ENCODE measurements at regions of chr4 and their contacts with region 1.

Region 1: DNA sequence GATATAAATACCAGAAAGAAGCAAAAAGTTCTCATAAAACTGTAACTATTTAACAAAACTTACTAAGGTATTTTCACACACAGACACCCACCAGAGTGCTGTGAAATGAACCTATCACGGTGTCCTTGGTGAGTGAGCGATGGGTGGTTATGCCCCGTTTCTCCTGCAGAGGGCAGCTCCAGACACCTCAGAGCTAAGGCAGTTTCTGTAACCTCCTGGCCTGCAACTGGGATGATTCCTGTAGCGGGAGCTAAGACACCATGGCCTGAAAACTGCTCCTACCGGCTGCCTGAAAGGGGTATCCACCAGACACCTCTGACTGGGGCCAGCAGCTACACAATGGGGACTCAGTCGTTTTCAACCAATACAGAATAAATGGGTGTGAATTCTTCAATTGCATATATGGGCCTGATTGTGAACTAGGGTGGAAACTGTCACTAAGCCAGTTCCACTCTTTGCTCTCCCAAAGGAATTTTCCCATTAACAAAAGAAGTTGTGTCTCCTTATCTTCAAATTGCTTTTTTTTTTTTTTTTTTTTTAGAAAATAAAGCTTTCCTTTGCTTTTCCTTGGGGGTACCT is 2375.8 kb upstream of the TENM3 start:
- DNase-seq: peak; percentile 81
- H3K4me3 Mint-ChIP-seq: no peak overlapping the region
- H3K27ac Mint-ChIP-seq: no peak overlapping the region
- H3K4me1 Mint-ChIP-seq: no peaks in the 10 kb centered on the region
- H3K27me3 Mint-ChIP-seq: no peaks in the 10 kb centered on the region
- CTCF ChIP-seq: peak; percentile 78

Region 2: GRCh38 chr4:180028682-180029081 is 161.3 kb after region 1 on chr4:
- CTCF ChIA-PET with region 1: no interaction called
- POLR2A ChIA-PET with region 1: no interaction called
- intact Hi-C with region 1: loop called (anchors 5 kb)
- DNase-seq: peak; percentile 62
- H3K4me3 Mint-ChIP-seq: no peak overlapping the region
- H3K27ac Mint-ChIP-seq: no peak overlapping the region
- H3K4me1 Mint-ChIP-seq: no peaks in the 10 kb centered on the region
- H3K27me3 Mint-ChIP-seq: no peaks in the 10 kb centered on the region
- CTCF ChIP-seq: peak; percentile 40

Region 3: GRCh38 chr4:180150818-180151217 is 283.4 kb after region 1 on chr4:
- CTCF ChIA-PET with region 1: interaction called, 5 read pairs
- POLR2A ChIA-PET with region 1: no interaction called
- intact Hi-C with region 1: loop called (anchors 2 kb)
- DNase-seq: peak; percentile 22
- H3K4me3 Mint-ChIP-seq: no peak overlapping the region
- H3K27ac Mint-ChIP-seq: no peak overlapping the region
- H3K4me1 Mint-ChIP-seq: no peaks in the 10 kb centered on the region
- H3K27me3 Mint-ChIP-seq: no peaks in the 10 kb centered on the region
- CTCF ChIP-seq: peak; percentile 25

Measured in MCF 10A (cell line).